Aorta (tissue), 5 donors: ENCODE measurements at regions of chr6 and their contacts with region 1.

Region 1: GRCh38 chr6:2791124-2791974 is 26.2 kb downstream of the WRNIP1 start:
- DNase-seq: peak in 1 of 2 donors; percentile 79
- ATAC-seq: peak; percentile 90
- H3K4me3 ChIP-seq: no peak overlapping the region
- H3K27ac ChIP-seq: peak overlapping the region; percentile 72 to 83
- H3K4me1 ChIP-seq: peaks cover 0 to 2% of the 10 kb centered on the region in 2 donors
- H3K27me3 ChIP-seq: no peaks in the 10 kb centered on the region

Region 2: GRCh38 chr6:2396846-2397630 is 394.3 kb before region 1 on chr6:
- intact Hi-C with region 1: no loop called
- DNase-seq: peak; percentile 74 to 84
- ATAC-seq: no peak
- H3K4me3 ChIP-seq: no peak overlapping the region
- H3K27ac ChIP-seq: peak overlapping the region in 1 of 2 donors; percentile 13
- H3K4me1 ChIP-seq: no peaks in the 10 kb centered on the region
- H3K27me3 ChIP-seq: no peaks in the 10 kb centered on the region

Region 3: DNA sequence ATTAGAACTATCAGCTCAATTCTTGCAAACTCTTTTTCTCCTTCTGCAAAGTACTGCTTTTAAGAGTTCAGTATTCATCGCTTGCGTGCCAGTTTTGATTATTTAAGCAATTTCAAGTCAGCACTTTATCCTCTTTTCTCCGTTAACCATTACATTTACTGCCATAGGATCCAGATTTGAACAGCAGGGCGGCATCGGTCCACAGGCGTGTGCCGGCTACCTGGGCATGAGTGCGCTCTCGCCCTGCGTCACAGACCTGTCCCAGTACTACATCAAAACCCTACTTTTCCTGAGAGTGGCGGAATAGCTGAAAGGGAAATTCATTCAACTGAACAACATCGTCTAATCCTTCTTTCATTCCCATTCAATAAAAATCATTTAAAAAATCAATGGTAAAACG is 94.1 kb before region 1 on chr6:
- intact Hi-C with region 1: no loop called
- DNase-seq: no peak
- ATAC-seq: no peak
- H3K4me3 ChIP-seq: no peak overlapping the region
- H3K27ac ChIP-seq: no peak overlapping the region
- H3K4me1 ChIP-seq: no peaks in the 10 kb centered on the region
- H3K27me3 ChIP-seq: no peaks in the 10 kb centered on the region

Region 4: GRCh38 chr6:2714111-2714895 is 77.0 kb before region 1 on chr6:
- intact Hi-C with region 1: no loop called
- DNase-seq: no peak
- ATAC-seq: peak; percentile 41
- H3K4me3 ChIP-seq: no peak overlapping the region
- H3K27ac ChIP-seq: no peak overlapping the region
- H3K4me1 ChIP-seq: no peaks in the 10 kb centered on the region
- H3K27me3 ChIP-seq: peaks cover 0 to 1% of the 10 kb centered on the region in 2 donors

Region 5: DNA sequence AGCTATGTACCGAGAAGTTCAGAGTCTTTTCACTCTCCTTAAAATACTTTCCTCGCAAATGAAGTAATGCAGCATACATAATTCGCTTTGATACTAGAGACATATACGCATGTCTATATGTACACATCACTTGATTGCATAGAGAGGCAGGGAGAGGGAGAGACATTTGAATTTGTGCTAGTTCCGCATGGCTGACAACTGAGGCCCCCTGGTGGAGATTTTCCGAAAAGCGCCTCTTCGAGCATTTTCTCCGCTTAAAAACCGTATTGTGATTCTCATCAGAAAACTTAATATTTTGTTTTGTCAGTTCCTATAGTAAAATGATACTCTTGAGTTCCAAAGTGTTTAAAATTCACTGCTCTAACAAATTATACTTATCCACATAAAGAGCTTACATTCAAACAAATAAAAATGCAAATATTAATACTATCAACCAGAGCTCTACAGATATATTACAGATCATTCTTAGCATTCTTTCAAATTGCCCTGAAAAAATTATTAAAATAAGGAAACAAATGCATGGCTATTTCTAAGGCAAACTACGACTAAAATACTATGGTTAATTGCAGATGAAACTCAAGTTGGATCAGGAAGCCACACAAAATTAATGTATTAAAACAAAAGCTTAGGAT is 41.3 kb before region 1 on chr6:
- intact Hi-C with region 1: no loop called
- DNase-seq: peak; percentile 59 to 84
- ATAC-seq: no peak
- H3K4me3 ChIP-seq: peak overlapping the region; percentile 21 to 33
- H3K27ac ChIP-seq: no peak overlapping the region
- H3K4me1 ChIP-seq: peaks cover 0 to 2% of the 10 kb centered on the region in 2 donors
- H3K27me3 ChIP-seq: no peaks in the 10 kb centered on the region

Region 6: GRCh38 chr6:2841264-2842138 is 50.2 kb after region 1 on chr6 and contains the start of gene SERPINB1:
- intact Hi-C with region 1: loop called (anchors 5 kb)
- DNase-seq: peak; percentile 96 to 97
- ATAC-seq: peak; percentile 93
- H3K4me3 ChIP-seq: peak within 1 kb of the TSS; percentile 36 to 61
- H3K27ac ChIP-seq: peak within 1 kb of the TSS; percentile 84 to 94
- H3K4me1 ChIP-seq: peaks cover 0 to 3% of the 10 kb centered on the region in 2 donors
- H3K27me3 ChIP-seq: no peaks in the 10 kb centered on the region
- total RNA-seq, gene SERPINB1: 42.8 to 46.6 TPM